Endothelial cell of umbilical vein (primary cell): ENCODE measurements at regions of chr16 and their contacts with region 1.

Region 1: DNA sequence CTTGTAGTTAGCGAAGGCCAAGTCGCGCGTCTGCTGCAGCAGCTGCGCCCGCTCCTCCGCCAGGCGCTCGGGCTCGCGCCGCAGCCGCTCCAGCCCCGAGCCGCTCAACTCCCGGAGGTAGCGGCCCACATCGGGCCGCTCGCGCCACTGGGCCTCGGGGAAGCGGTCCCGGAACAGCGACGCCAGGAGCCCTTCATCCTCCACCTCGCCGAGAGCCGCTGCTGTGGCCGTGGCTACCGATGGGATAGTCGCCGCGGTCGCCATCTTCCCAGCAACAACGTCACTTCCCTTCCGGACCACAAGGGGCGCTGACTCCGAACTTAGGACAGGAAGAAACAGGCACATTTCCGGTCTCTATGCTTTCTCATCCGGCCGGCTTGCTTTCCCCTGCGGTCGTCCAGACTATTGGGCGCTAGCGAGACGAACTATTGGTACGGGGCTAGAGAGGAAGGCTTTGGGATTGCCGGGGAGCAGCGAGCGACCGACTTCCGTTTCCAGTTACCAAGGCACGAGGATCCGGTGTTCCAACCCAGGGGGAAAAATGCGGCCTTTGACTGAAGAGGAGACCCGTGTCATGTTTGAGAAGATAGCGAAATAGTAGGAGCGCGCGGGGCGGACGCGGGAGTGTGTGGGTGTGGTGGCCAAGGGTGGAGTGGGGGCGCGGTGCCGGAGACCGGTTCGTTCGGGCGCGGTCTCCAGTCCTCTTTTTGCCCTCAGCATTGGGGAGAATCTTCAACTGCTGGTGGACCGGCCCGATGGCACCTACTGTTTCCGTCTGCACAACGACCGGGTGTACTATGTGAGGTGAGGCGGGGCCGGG is at the starts of genes COG8 and NIP7:
- DNase-seq: peak; percentile 96
- H3K4me3 ChIP-seq: peak within 1 kb of the TSS; percentile 55 to 81 (median 75)
- H3K27ac ChIP-seq: peak within 1 kb of the TSS; percentile 86
- H3K4me1 ChIP-seq: peaks cover 16% of the 10 kb centered on the region
- H3K27me3 ChIP-seq: no peaks in the 10 kb centered on the region
- CTCF ChIP-seq: peak; percentile 82 to 87
- POLR2A ChIP-seq: peak; percentile 94
- total RNA-seq, gene COG8: 25.1 and 31.6 TPM in 2 replicates
- total RNA-seq, gene NIP7: 40.9 and 46.8 TPM in 2 replicates

Region 2: GRCh38 chr16:69310653-69311532 is 28.6 kb before region 1 on chr16 and contains the start of gene VPS4A:
- CTCF ChIA-PET with region 1: no interaction called
- POLR2A ChIA-PET with region 1: no interaction called
- dilution Hi-C with region 1: no loop called
- intact Hi-C with region 1: loop called (anchors 1 kb)
- DNase-seq: peak; percentile 98
- H3K4me3 ChIP-seq: peak within 1 kb of the TSS; percentile 56 to 76 (median 59)
- H3K27ac ChIP-seq: peak within 1 kb of the TSS; percentile 46
- H3K4me1 ChIP-seq: peaks cover 10% of the 10 kb centered on the region
- H3K27me3 ChIP-seq: no peaks in the 10 kb centered on the region
- CTCF ChIP-seq: peak; percentile 86 to 96
- POLR2A ChIP-seq: peak; percentile 85
- total RNA-seq, gene VPS4A: 34.8 and 37.1 TPM in 2 replicates

Region 3: GRCh38 chr16:69321080-69321479 is 18.4 kb before region 1 on chr16:
- CTCF ChIA-PET with region 1: no interaction called
- POLR2A ChIA-PET with region 1: no interaction called
- dilution Hi-C with region 1: no loop called
- intact Hi-C with region 1: no loop called
- DNase-seq: no peak
- H3K4me3 ChIP-seq: no peak overlapping the region
- H3K27ac ChIP-seq: no peak overlapping the region
- H3K4me1 ChIP-seq: no peaks in the 10 kb centered on the region
- H3K27me3 ChIP-seq: no peaks in the 10 kb centered on the region
- CTCF ChIP-seq: no peak
- POLR2A ChIP-seq: no peak

Region 4: DNA sequence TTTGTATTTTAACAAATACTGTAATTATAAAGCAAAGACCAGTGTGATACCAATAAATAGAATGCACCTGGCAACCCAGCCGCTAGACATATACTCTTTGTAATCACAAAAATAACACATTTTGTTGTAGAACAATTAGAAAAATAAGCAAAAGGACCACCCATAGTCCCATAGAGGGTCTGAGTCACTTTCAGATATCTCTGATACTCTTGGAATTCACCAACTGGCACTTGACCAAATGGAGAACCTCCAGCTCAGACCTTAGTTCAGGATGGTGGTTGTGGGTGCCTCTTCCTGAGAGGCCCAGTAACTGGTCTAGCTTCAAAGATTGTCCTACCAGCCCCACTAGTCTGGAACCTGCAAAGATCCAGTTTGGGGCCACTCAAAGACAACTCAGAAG is 47.1 kb after region 1 on chr16:
- CTCF ChIA-PET with region 1: interaction called, 5 read pairs
- POLR2A ChIA-PET with region 1: interaction called, 3 read pairs
- dilution Hi-C with region 1: no loop called
- intact Hi-C with region 1: loop called (anchors 1 kb)
- DNase-seq: no peak
- H3K4me3 ChIP-seq: no peak overlapping the region
- H3K27ac ChIP-seq: no peak overlapping the region
- H3K4me1 ChIP-seq: peaks cover 18% of the 10 kb centered on the region
- H3K27me3 ChIP-seq: no peaks in the 10 kb centered on the region
- CTCF ChIP-seq: no peak
- POLR2A ChIP-seq: no peak

Region 5: GRCh38 chr16:69397821-69398521 is 58.5 kb after region 1 on chr16:
- CTCF ChIA-PET with region 1: no interaction called
- POLR2A ChIA-PET with region 1: no interaction called
- dilution Hi-C with region 1: no loop called
- intact Hi-C with region 1: no loop called
- DNase-seq: peak; percentile 90
- H3K4me3 ChIP-seq: peak overlapping the region in 1 of 3 experiments; percentile 55
- H3K27ac ChIP-seq: peak overlapping the region; percentile 92
- H3K4me1 ChIP-seq: peaks cover 44% of the 10 kb centered on the region
- H3K27me3 ChIP-seq: peaks cover 0 to 1% of the 10 kb centered on the region in 2 experiments
- CTCF ChIP-seq: peak; percentile 74 to 76
- POLR2A ChIP-seq: no peak